ENCODE measurements at regions of chr17 and their contacts with region 1.

Region 1: DNA sequence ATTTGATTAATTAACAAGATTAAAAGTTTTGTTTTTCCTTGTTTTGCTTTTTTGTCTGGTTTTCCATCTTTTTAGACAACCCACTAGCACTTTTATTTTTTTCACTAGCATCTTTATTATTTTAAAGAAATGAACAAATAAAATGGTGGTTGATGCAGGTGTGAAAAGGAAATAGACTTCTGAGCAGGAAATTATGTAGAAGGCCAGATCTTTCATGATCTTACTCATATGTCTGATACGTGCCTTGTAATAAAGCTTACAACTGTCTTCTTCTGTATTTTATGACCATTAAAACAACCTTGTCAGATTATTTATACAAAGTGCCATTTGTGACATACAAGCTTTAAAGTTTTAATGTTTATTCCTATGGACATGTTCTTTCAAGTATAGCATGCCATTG is 6.3 kb downstream of the SLFN12L start:
- DNase-seq: no peak
- ATAC-seq: no peak
- H3K4me3 ChIP-seq: peak overlapping the region; percentile 28
- H3K4me3 Mint-ChIP-seq: peak overlapping the region in 8 of 10 donors; percentile 16 to 76 (median 55)
- H3K27ac ChIP-seq: peak overlapping the region; percentile 50
- H3K27ac Mint-ChIP-seq: peak overlapping the region in 8 of 9 donors; percentile 15 to 89 (median 60)
- H3K4me1 ChIP-seq: peaks cover 30 to 45% of the 10 kb centered on the region in 2 donors
- H3K4me1 Mint-ChIP-seq: peaks cover 46 to 84% (median 70%) of the 10 kb centered on the region in 7 donors
- H3K27me3 ChIP-seq: no peaks in the 10 kb centered on the region
- H3K27me3 Mint-ChIP-seq: no peaks in the 10 kb centered on the region

Region 2: DNA sequence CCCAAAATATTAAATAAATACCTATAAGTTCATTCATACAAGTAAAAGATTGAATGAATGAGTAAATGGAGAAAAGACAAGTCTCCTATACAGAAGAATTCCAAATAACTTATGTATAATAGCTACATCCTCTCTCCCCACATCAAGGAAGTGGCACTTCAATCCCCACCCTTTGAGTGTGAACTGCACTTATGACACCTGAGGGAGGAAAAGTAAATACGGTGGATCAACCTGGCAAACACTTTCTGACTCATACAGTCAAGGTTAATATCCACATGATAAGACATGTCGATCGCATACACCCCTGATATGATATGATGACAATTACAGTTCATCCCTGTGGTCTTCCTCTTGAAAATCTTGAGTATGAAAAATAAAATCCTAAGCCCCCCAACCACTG is 11.7 kb before region 1 on chr17:
- CTCF ChIA-PET with region 1: interaction called, 12 read pairs
- POLR2A ChIA-PET with region 1: interaction called, 18 read pairs
- intact Hi-C with region 1: loop called (anchors 1 to 2 kb)
- DNase-seq: no peak
- ATAC-seq: no peak
- H3K4me3 ChIP-seq: peak overlapping the region; percentile 25
- H3K4me3 Mint-ChIP-seq: peak overlapping the region in 9 of 10 donors; percentile 6 to 82 (median 57)
- H3K27ac ChIP-seq: no peak overlapping the region
- H3K27ac Mint-ChIP-seq: peak overlapping the region in 5 of 9 donors; percentile 49 to 80 (median 74)
- H3K4me1 ChIP-seq: peaks cover 41 to 86% of the 10 kb centered on the region in 2 donors
- H3K4me1 Mint-ChIP-seq: peaks cover 59 to 98% (median 93%) of the 10 kb centered on the region in 7 donors
- H3K27me3 ChIP-seq: no peaks in the 10 kb centered on the region
- H3K27me3 Mint-ChIP-seq: peaks cover 0 to 4% (median 0%) of the 10 kb centered on the region in 5 donors

Region 3: GRCh38 chr17:35578197-35578928 is 47.2 kb after region 1 on chr17 and contains the start of gene PEX12:
- CTCF ChIA-PET with region 1: no interaction called
- POLR2A ChIA-PET with region 1: interaction called, 97 read pairs
- intact Hi-C with region 1: no loop called
- DNase-seq: peak; percentile 62 to 94 (median 89)
- ATAC-seq: peak; percentile 99
- H3K4me3 ChIP-seq: peak within 1 kb of the TSS; percentile 86
- H3K4me3 Mint-ChIP-seq: peak within 1 kb of the TSS; percentile 92 to 100 (median 97)
- H3K27ac ChIP-seq: peak within 1 kb of the TSS; percentile 92
- H3K27ac Mint-ChIP-seq: peak within 1 kb of the TSS; percentile 96 to 100 (median 99)
- H3K4me1 ChIP-seq: peaks cover 5 to 12% of the 10 kb centered on the region in 2 donors
- H3K4me1 Mint-ChIP-seq: peaks cover 6 to 40% (median 32%) of the 10 kb centered on the region in 7 donors
- H3K27me3 ChIP-seq: no peaks in the 10 kb centered on the region
- H3K27me3 Mint-ChIP-seq: peaks cover 0 to 2% (median 0%) of the 10 kb centered on the region in 5 donors
- total RNA-seq, gene PEX12: 2.9 to 8.0 (median 5.3) TPM

Measured in naive thymus-derived CD4-positive, alpha-beta T cell (primary cell).